H1 (cell line): ENCODE measurements at regions of chr5 and their contacts with region 1.

Region 1: DNA sequence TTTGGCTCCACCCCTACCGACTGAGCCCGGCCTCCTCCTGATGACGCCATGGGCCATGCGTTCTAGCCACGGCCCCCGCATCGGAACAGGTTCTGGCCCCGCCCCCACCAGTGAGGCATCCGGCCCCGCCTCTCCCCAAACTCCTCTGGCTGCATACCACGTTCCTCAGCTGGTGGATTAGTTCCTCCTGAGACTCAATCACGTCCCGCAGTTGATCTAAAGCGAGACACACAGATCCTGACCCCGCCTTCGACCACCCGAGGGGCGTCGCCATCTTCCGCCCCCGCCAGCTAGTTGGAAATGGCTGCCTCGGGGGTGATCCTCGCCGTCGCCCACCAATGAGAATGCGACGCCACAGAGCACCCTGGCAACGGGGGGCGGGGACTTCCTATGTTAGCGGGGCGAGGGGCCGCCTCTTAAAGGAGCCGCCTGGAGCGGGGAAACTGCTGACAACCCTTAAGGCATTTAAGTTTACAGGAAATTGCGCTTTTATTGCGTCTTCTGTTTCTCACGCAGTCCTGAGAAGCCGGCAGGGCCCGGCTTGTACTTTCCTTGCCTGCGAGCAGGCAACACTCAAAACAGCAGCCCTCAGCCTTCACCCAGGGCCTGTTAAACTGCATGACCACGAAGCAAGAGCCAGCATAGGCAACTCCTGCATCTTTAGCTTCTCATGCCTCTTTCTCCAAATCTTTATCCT is at the start of gene SPATA24:
- DNase-seq: peak; percentile 87 to 95
- H3K4me3 ChIP-seq: peak within 1 kb of the TSS; percentile 72 to 84 (median 80)
- H3K27ac ChIP-seq: peak within 1 kb of the TSS; percentile 94
- H3K4me1 ChIP-seq: peaks cover 0 to 8% (median 4%) of the 10 kb centered on the region in 4 experiments; a peak in 6 of 7 replicates
- H3K27me3 ChIP-seq: 0 out of 7 replicates have a peak, but pooled peaks cover 0 to 4% (median 0%) of the 10 kb centered on the region in 4 experiments
- CTCF ChIP-seq: no peak
- EP300 ChIP-seq: no peak
- POLR2A ChIP-seq: peak in 1 of 2 experiments; percentile 74; a peak in 2 of 3 replicates
- RAD21 ChIP-seq: no peak
- total RNA-seq, gene SPATA24: 9.4 and 11.6 TPM in 2 replicates

Region 2: DNA sequence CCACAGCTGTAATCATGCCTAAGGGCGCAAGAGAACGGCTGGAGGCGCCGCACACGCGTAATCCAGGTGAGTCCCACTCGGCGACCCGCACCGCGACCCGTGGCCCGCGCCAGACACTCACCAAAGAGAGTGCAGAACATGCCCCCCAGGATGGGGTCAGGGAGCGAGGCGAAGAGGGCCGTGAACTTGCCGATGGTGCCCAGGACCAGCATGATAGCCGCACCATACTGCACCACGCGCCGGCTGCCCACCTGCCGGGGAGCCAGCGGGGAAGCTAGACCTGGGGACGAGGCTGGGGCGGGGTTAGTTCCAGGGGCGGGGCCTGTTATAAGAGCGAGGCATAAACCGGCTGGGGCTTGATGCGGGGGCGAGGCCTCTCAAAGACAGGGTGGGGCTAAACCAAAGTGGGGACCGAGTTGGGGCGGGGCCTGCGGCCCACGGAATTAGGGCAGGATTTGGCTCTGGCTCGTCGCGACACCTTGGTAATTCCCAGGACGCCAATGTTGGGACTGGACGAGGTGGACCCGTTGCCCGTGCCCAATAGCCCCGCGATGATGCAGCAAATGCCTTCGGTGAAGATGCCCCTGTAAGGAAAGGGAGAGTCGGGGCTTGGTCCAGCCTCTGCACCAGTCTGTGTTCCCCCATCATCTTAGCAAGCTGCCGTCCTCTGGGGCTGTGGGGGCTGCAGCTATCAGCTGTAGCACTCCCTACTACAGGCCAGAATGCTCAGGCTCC is 25.7 kb before region 1 on chr5:
- CTCF ChIA-PET with region 1: interaction called, 14 read pairs
- POLR2A ChIA-PET with region 1: interaction called, 4 read pairs
- DNase-seq: no peak
- H3K4me3 ChIP-seq: no peak overlapping the region
- H3K27ac ChIP-seq: 0 out of 2 replicates have a peak overlapping the region, but pooled peaks have one; percentile 5
- H3K4me1 ChIP-seq: peaks cover 0 to 11% (median 0%) of the 10 kb centered on the region in 4 experiments; a peak in 2 of 7 replicates
- H3K27me3 ChIP-seq: no peaks in the 10 kb centered on the region
- CTCF ChIP-seq: no peak
- EP300 ChIP-seq: no peak
- POLR2A ChIP-seq: no peak
- RAD21 ChIP-seq: no peak

Region 3: GRCh38 chr5:139385061-139386049 is 18.6 kb before region 1 on chr5:
- CTCF ChIA-PET with region 1: interaction called, 15 read pairs
- POLR2A ChIA-PET with region 1: interaction called, 3 read pairs
- DNase-seq: no peak
- H3K4me3 ChIP-seq: no peak overlapping the region
- H3K27ac ChIP-seq: no peak overlapping the region
- H3K4me1 ChIP-seq: peaks cover 3 to 12% (median 9%) of the 10 kb centered on the region in 4 experiments
- H3K27me3 ChIP-seq: no peaks in the 10 kb centered on the region
- CTCF ChIP-seq: peak in 1 of 3 experiments; percentile 2; a peak in 1 of 4 replicates
- EP300 ChIP-seq: no peak
- POLR2A ChIP-seq: no peak
- RAD21 ChIP-seq: 0 out of 4 replicates have a peak, but pooled peaks of 1 of the 2 experiments have one; percentile 8

Region 4: GRCh38 chr5:139392678-139393496 is 11.0 kb before region 1 on chr5:
- CTCF ChIA-PET with region 1: interaction called, 16 read pairs
- POLR2A ChIA-PET with region 1: interaction called, 16 read pairs
- DNase-seq: peak in 1 of 2 experiments; percentile 94
- H3K4me3 ChIP-seq: peak overlapping the region; percentile 42 to 68 (median 54)
- H3K27ac ChIP-seq: no peak overlapping the region
- H3K4me1 ChIP-seq: peaks cover 3 to 39% (median 21%) of the 10 kb centered on the region in 4 experiments
- H3K27me3 ChIP-seq: peaks cover 14 to 34% (median 28%) of the 10 kb centered on the region in 4 experiments; a peak in 6 of 7 replicates
- CTCF ChIP-seq: peak in 2 of 3 experiments; percentile 74 to 92; a peak in 3 of 4 replicates
- EP300 ChIP-seq: peak in 1 of 2 experiments; percentile 3; a peak in 1 of 3 replicates
- POLR2A ChIP-seq: peak in 1 of 2 experiments; percentile 52; a peak in 2 of 3 replicates
- RAD21 ChIP-seq: peak; percentile 65 to 87